ENCODE measurements at regions of chr11 and their contacts with region 1.

Region 1: GRCh38 chr11:73184953-73185671 is 33.0 kb upstream of the P2RY2 start:
- DNase-seq: no peak
- H3K4me3 ChIP-seq: no peak overlapping the region
- H3K27ac ChIP-seq: no peak overlapping the region
- H3K4me1 ChIP-seq: peaks cover 10 to 20% (median 12%) of the 10 kb centered on the region in 4 donors
- H3K27me3 ChIP-seq: peaks cover 0 to 5% (median 0%) of the 10 kb centered on the region in 4 donors
- CTCF ChIP-seq: peak; percentile 70 to 90 (median 75)
- EP300 ChIP-seq: no peak
- POLR2A ChIP-seq: no peak

Region 2: GRCh38 chr11:73157053-73158010 is 27.8 kb before region 1 on chr11:
- intact Hi-C with region 1: no loop called
- DNase-seq: no peak
- H3K4me3 ChIP-seq: peak overlapping the region in 1 of 4 donors; percentile 8
- H3K27ac ChIP-seq: peak overlapping the region; percentile 76 to 91 (median 80)
- H3K4me1 ChIP-seq: peaks cover 34 to 59% (median 43%) of the 10 kb centered on the region in 4 donors
- H3K27me3 ChIP-seq: peaks cover 0 to 4% (median 0%) of the 10 kb centered on the region in 4 donors
- CTCF ChIP-seq: no peak
- EP300 ChIP-seq: no peak
- POLR2A ChIP-seq: no peak

Region 3: GRCh38 chr11:73242251-73243079 is 57.4 kb after region 1 on chr11:
- intact Hi-C with region 1: loop called (anchors 2 kb)
- DNase-seq: no peak
- H3K4me3 ChIP-seq: peak overlapping the region; percentile 26 to 42 (median 33)
- H3K27ac ChIP-seq: no peak overlapping the region
- H3K4me1 ChIP-seq: peaks cover 24 to 46% (median 24%) of the 10 kb centered on the region in 4 donors
- H3K27me3 ChIP-seq: no peaks in the 10 kb centered on the region
- CTCF ChIP-seq: peak; percentile 78 to 87 (median 86)
- EP300 ChIP-seq: no peak
- POLR2A ChIP-seq: no peak

Region 4: DNA sequence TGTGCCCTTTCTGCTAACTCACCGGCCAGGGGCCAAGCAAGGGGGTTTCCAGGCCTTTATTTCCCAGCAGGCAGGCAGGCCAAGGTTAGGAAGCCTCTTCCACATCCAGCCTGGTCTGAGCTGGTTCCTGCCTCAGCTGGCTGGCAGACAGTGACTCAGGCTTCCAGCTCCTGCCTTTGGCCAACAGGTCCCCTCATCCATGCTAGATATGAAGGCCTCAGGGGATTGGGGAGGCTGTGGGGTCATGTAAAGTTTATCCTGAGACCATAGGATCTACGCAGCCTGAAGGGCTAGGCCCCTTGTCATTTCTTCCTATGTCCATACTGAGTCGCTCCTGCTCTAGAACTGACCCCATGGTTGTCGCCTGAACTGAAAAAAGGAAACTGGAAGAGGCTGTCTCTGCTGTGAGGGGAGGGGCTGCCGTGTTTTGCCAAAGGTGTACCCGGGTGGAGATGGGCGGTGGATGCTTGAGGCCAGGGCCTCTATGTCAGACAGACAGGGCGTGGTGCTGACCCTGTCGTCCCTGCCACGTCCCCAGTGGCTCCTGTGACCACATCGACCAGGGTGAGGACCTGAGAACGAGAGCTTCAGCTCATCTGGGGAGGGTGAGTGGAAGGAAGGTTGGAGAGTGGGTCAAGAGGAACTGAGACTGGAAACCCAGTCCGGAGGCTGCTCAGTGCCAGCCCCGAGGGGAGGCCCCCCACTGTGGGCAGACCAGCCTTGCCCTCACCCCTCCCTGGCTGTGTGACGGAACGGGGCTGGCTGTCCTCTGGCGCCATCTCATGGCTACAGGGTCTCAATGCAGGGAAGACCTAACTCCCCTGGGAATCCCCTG is 104.0 kb after region 1 on chr11:
- intact Hi-C with region 1: loop called (anchors 2 kb)
- DNase-seq: no peak
- H3K4me3 ChIP-seq: peak overlapping the region; percentile 25 to 42 (median 30)
- H3K27ac ChIP-seq: peak overlapping the region; percentile 24 to 51 (median 40)
- H3K4me1 ChIP-seq: peaks cover 19 to 30% (median 25%) of the 10 kb centered on the region in 4 donors
- H3K27me3 ChIP-seq: no peaks in the 10 kb centered on the region
- CTCF ChIP-seq: peak; percentile 80 to 93 (median 86)
- EP300 ChIP-seq: no peak
- POLR2A ChIP-seq: no peak

Measured in esophagus muscularis mucosa (tissue), 4 donors.